Heart right ventricle (tissue), 16 donors: ENCODE measurements at regions of chr6 and their contacts with region 1.

Region 1: DNA sequence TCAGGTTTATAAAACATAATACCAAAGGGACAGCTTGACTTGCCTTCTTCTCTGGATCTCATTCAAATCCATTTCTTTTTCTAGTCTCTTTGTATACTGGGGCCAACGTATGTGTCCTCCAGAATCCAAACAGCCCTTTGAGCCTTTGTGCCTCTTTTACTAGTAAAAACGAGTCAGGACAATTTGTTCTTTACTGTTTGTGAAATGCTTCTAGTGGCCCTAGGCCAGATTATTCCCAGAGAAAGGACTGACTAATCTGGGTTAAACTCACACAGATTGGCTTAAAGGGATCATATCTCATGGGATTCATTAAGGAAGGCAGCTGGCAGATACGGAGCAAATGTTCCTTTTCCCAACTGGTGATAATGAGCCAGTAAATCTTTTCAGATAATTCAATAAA is 32.1 kb upstream of the MANEA start:
- DNase-seq: peak in 1 of 2 donors; percentile 7
- ATAC-seq: peak; percentile 59 to 84 (median 76)
- H3K4me3 ChIP-seq: no peak overlapping the region
- H3K27ac ChIP-seq: peak overlapping the region in 6 of 10 donors; percentile 9 to 71 (median 48)
- H3K4me1 ChIP-seq: peaks cover 0 to 25% (median 7%) of the 10 kb centered on the region in 9 donors
- H3K27me3 ChIP-seq: no peaks in the 10 kb centered on the region
- CTCF ChIP-seq: no peak

Region 2: GRCh38 chr6:95577304-95578105 is 32.3 kb after region 1 on chr6 and contains the start of gene MANEA:
- intact Hi-C with region 1: loop called in 2 of 10 experiments (anchors 2 kb)
- DNase-seq: peak; percentile 75 to 86
- ATAC-seq: peak; percentile 95 to 99 (median 97)
- H3K4me3 ChIP-seq: peak within 1 kb of the TSS; percentile 59 to 88 (median 69)
- H3K27ac ChIP-seq: peak within 1 kb of the TSS; percentile 64 to 95 (median 90)
- H3K4me1 ChIP-seq: peaks cover 0 to 44% (median 28%) of the 10 kb centered on the region in 9 donors
- H3K27me3 ChIP-seq: no peaks in the 10 kb centered on the region
- CTCF ChIP-seq: peak in 2 of 9 donors; percentile 4 to 6
- total RNA-seq, gene MANEA: 3.5 to 7.0 (median 5.9) TPM